Prostate gland (tissue), 2 donors: ENCODE measurements at regions of chr16 and their contacts with region 1.

Region 1: DNA sequence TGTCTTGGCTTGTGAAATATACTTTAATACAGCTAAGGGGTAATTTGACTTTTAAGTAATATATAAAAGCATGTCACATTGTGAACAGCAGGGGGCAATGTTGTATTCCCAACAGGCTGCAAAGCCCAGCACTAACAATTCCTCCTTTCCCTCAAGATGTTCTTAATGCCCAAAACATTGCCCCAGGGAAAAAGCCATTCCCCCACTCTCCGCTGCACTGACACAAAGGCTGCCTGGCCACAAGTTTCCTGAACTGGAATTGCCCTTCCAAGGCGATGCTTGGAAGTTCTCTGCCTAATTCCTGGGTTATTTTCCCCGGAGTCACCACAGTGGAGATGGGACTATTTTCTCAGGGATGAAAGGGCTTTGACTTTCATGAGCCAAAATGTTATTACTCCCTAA is 27.2 kb downstream of the CLEC16A start:
- DNase-seq: peak; percentile 75
- H3K4me3 ChIP-seq: no peak overlapping the region
- H3K27ac ChIP-seq: no peak overlapping the region
- H3K4me1 ChIP-seq: no peaks in the 10 kb centered on the region
- H3K27me3 ChIP-seq: no peaks in the 10 kb centered on the region
- CTCF ChIP-seq: peak; percentile 56 to 88 (median 84)
- POLR2A ChIP-seq: no peak

Region 2: GRCh38 chr16:11105038-11105903 is 133.7 kb after region 1 on chr16:
- intact Hi-C with region 1: loop called (anchors 10 kb)
- DNase-seq: peak; percentile 9
- H3K4me3 ChIP-seq: no peak overlapping the region
- H3K27ac ChIP-seq: no peak overlapping the region
- H3K4me1 ChIP-seq: no peaks in the 10 kb centered on the region
- H3K27me3 ChIP-seq: no peaks in the 10 kb centered on the region
- CTCF ChIP-seq: no peak
- POLR2A ChIP-seq: no peak

Region 3: GRCh38 chr16:11133344-11133943 is 161.9 kb after region 1 on chr16:
- intact Hi-C with region 1: loop called (anchors 10 kb)
- DNase-seq: peak; percentile 79
- H3K4me3 ChIP-seq: no peak overlapping the region
- H3K27ac ChIP-seq: peak overlapping the region in 1 of 2 donors; percentile 29
- H3K4me1 ChIP-seq: no peaks in the 10 kb centered on the region
- H3K27me3 ChIP-seq: no peaks in the 10 kb centered on the region
- CTCF ChIP-seq: no peak
- POLR2A ChIP-seq: no peak

Region 4: GRCh38 chr16:11255737-11256660 is 284.4 kb after region 1 on chr16 and contains the start of gene SOCS1:
- intact Hi-C with region 1: loop called (anchors 2 kb)
- DNase-seq: peak; percentile 86
- H3K4me3 ChIP-seq: peak within 1 kb of the TSS; percentile 73 to 93
- H3K27ac ChIP-seq: peak within 1 kb of the TSS; percentile 98 to 99
- H3K4me1 ChIP-seq: no peaks in the 10 kb centered on the region
- H3K27me3 ChIP-seq: no peaks in the 10 kb centered on the region
- CTCF ChIP-seq: peak; percentile 82 to 97 (median 94)
- POLR2A ChIP-seq: peak; percentile 87
- total RNA-seq, gene SOCS1: 2.6 to 8.2 TPM

Region 5: DNA sequence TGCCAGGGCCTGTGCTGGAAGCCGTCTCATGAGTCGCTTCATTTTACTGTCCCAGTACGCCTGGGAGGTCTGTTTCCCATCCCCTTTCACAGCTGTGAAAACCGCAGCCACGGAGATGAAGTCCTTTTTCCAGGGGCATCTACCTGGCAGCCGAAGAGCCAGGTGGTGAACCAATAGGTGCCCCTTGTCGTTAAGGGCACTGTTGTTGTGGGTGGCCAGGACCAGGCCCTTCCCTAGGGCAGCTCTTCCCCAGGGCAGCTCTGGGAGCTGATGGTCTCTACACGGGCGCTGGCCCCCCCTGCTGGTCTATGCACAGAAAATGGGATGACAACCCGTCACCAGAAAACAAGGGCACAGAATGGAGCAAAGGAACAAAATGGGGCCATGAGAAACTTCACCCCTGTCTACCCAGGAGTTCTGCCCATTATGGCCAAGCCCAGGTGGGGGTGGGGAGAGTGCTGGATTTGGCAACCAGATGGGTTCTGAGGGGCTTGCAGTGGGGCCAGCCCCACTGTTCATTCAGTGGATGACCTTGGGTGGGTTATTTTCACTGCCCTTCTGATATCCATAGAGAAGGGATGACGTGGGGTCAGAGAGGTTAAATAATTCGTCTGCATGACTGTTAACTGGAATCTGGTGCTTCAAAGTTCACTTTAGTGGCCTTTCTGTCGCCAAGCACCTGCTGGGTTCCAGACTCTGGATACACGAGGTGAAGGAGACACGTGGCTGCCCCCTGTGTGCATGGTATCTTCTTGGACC is 385.2 kb after region 1 on chr16:
- intact Hi-C with region 1: loop called (anchors 5 kb)
- DNase-seq: no peak
- H3K4me3 ChIP-seq: no peak overlapping the region
- H3K27ac ChIP-seq: no peak overlapping the region
- H3K4me1 ChIP-seq: peaks cover 2% of the 10 kb centered on the region
- H3K27me3 ChIP-seq: no peaks in the 10 kb centered on the region
- CTCF ChIP-seq: peak; percentile 15 to 53 (median 44)
- POLR2A ChIP-seq: no peak